GM12878 (cell line): ENCODE measurements at regions of chr17 and their contacts with region 1.

Region 1: DNA sequence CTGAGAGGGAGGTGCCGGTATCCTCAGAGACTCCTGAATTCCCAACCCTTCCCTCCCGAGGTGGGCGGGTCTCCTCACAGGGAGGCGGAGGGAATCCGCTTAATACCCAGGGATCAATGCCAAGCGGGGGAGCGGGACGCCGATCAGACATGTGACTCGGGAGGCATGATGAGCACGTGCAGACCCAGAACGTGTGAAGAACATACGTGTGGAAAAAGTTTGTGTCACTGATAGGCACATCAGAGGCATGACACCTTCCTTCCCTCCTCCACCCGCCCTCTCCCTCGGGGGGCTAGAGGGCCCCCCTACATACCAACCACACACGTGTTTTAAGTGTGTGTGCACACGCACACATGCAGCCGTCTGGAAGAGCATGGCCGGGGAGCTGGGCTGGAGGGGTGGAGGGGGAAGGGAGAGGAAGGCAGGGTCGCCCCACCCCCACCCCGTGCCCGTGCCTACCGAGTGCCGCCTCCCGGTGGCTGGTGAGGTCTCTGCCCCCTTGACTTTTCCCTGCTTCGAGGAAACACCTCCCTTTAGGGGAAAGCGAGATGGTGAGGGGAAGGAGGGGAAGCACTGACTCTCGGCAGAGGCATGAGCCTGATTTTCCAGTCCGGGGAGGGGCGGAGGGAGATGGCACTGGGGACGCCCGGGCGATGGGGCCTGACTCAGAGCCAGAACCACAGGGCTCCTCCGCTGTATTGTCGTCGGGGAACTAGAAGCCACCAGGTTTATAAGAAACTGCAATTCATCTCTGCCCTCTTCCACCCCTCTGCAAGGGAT is 12.1 kb upstream of the TBX21 start:
- DNase-seq: no peak
- ATAC-seq: peak; percentile 71
- H3K4me3 ChIP-seq: no peak overlapping the region
- H3K27ac ChIP-seq: no peak overlapping the region
- H3K4me1 ChIP-seq: peaks cover 63% of the 10 kb centered on the region
- H3K27me3 ChIP-seq: peaks cover 0 to 5% of the 10 kb centered on the region in 2 experiments; a peak in 3 of 4 replicates
- CTCF ChIP-seq: no peak
- EP300 ChIP-seq: no peak
- POLR2A ChIP-seq: no peak
- RAD21 ChIP-seq: no peak

Region 2: DNA sequence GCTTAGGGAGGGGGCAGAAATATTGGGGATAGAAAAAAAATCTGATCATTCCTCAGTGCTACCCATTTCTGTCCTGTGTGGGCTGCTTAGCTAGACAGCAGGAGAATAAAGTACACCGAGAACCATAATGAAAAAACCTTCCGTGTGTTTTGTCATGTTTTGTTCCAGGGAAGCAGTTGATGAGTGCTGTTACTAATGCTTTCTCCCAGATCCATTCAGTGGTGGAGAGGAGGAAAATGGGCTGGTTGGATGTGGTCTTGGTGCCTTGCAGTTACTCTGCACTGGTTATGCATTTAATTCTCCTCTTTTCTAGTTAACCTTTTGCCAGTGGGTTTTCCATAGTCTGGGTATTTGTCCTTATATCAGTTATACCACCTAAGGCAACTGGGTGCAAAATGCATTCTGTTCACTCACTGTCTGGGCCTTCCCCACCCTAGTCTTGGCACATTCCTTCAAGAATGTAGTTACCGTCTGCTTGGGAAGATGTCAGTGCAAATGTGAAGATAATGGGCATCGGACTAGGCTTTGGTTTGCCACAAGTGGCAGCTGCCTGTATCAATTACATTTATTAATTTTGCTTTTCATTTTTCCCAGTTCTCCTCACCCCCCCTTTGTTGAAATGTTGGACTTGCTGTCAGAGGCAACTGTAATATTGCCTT is 36.3 kb before region 1 on chr17:
- CTCF ChIA-PET with region 1: no interaction called
- POLR2A ChIA-PET with region 1: no interaction called
- RAD21 ChIA-PET with region 1: no interaction called
- SMC1A ChIA-PET with region 1: no interaction called
- in situ Hi-C with region 1: no loop called
- intact Hi-C with region 1: no loop called
- DNase-seq: no peak
- ATAC-seq: no peak
- H3K4me3 ChIP-seq: no peak overlapping the region
- H3K27ac ChIP-seq: no peak overlapping the region
- H3K4me1 ChIP-seq: no peaks in the 10 kb centered on the region
- H3K27me3 ChIP-seq: no peaks in the 10 kb centered on the region
- CTCF ChIP-seq: no peak
- EP300 ChIP-seq: no peak
- POLR2A ChIP-seq: peak; percentile 45; the same call in 1 of the 2 replicates
- RAD21 ChIP-seq: no peak

Region 3: DNA sequence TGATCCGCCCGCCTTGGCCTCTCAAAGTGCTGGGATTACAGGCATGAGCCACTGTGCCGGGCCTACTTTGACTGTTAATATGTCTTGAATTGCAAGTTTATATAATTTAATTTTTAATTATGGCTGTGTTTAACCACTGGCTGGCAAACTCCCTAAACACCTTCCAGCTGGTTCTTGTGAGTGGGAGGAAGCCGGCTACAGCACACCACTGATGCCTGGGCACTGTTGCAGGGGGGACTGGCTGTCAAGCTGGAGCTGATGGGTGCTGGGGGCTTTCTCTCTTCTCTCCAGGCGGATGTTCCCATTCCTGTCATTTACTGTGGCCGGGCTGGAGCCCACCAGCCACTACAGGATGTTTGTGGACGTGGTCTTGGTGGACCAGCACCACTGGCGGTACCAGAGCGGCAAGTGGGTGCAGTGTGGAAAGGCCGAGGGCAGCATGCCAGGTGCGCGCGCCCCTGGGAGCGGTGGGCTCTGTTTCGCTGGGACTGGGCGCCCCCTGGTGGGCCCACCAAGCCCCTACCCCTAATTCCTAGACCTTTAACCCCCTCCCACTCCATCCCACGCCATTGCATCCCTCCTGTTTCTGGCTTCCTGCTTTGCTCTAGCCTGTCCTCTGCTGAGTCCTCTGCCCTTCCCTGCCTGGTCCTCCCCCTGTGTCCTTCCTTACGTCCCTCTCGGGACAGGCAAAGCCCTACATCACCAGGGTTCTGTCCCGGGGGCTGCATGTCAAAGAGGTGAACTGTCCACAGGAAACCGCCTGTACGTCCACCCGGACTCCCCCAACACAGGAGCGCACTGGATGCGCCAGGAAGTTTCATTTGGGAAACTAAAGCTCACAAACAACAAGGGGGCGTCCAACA is 21.6 kb after region 1 on chr17:
- CTCF ChIA-PET with region 1: interaction called, 20 read pairs
- POLR2A ChIA-PET with region 1: no interaction called
- RAD21 ChIA-PET with region 1: interaction called, 6 read pairs
- SMC1A ChIA-PET with region 1: interaction called, 6 read pairs
- in situ Hi-C with region 1: no loop called
- intact Hi-C with region 1: no loop called
- DNase-seq: no peak
- ATAC-seq: peak; percentile 85
- H3K4me3 ChIP-seq: no peak overlapping the region
- H3K27ac ChIP-seq: no peak overlapping the region
- H3K4me1 ChIP-seq: peaks cover 18% of the 10 kb centered on the region
- H3K27me3 ChIP-seq: no peaks in the 10 kb centered on the region
- CTCF ChIP-seq: peak; percentile 46 to 59 (median 55)
- EP300 ChIP-seq: no peak
- POLR2A ChIP-seq: no peak
- RAD21 ChIP-seq: peak; percentile 66